ENCODE measurements at regions of chr15 and their contacts with region 1.

Region 1: DNA sequence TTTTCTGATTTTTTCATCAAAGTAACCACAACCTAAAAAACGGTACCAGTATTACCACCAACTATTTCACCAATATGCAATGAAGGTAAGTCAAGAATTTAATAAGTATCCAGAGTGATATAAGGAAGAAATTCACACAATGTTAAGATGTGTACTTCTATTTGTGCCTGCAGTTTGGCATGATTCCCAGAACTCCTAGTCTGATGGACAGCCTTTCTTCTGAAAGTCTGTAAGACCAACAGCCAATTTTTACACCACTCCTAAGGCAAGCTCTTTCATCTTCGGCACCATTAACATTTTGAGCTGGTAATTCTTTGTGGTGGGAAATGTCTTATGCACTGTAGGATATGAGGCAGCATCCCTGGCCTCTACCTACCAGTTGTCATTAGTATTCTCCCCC is 108.3 kb downstream of the VPS13C start:
- DNase-seq: no peak
- ATAC-seq: no peak
- H3K4me3 ChIP-seq: no peak overlapping the region
- H3K4me3 Mint-ChIP-seq: no peak overlapping the region
- H3K27ac ChIP-seq: no peak overlapping the region
- H3K27ac Mint-ChIP-seq: no peak overlapping the region
- H3K4me1 ChIP-seq: no peaks in the 10 kb centered on the region
- H3K4me1 Mint-ChIP-seq: no peaks in the 10 kb centered on the region
- H3K27me3 ChIP-seq: no peaks in the 10 kb centered on the region
- H3K27me3 Mint-ChIP-seq: no peaks in the 10 kb centered on the region
- CTCF ChIP-seq: no peak

Region 2: DNA sequence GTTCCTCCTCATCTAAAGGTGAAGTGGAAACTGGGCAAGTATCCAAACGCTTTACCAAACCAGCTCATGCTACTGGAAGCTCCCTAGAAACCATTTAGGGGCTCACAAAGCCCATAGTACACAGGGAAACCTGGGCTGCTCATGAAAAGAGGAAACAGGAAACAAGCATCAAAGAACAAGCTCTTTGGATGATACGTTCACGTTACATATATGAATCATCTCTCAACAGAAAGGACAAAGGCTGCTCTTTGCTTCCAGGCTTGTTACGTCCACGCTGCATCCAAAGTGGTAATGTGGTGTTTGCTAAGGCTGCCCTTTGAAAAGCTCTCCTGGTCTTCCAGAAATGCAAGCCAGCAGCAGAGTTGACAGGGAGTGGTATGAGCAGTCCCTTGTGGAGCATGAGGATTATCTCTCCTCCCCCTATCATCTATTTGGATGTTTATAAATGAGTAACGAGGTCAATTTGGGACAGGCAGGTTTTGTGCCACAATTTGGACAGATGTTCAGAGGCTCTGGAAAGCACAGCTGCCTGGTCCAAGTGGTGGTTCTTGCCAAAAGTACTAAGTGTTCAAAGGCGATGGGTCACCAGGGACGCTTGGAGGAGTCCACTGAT is 624.8 kb before region 1 on chr15:
- CTCF ChIA-PET with region 1: no interaction called
- POLR2A ChIA-PET with region 1: no interaction called
- intact Hi-C with region 1: no loop called
- DNase-seq: no peak
- ATAC-seq: no peak
- H3K4me3 ChIP-seq: no peak overlapping the region
- H3K4me3 Mint-ChIP-seq: no peak overlapping the region
- H3K27ac ChIP-seq: no peak overlapping the region
- H3K27ac Mint-ChIP-seq: no peak overlapping the region
- H3K4me1 ChIP-seq: no peaks in the 10 kb centered on the region
- H3K4me1 Mint-ChIP-seq: no peaks in the 10 kb centered on the region
- H3K27me3 ChIP-seq: no peaks in the 10 kb centered on the region
- H3K27me3 Mint-ChIP-seq: peaks cover 26% of the 10 kb centered on the region
- CTCF ChIP-seq: no peak

Region 3: GRCh38 chr15:61916104-61916503 is 35.8 kb before region 1 on chr15:
- CTCF ChIA-PET with region 1: no interaction called
- POLR2A ChIA-PET with region 1: no interaction called
- intact Hi-C with region 1: loop called in 1 of 2 experiments (anchors 5 kb)
- DNase-seq: no peak
- ATAC-seq: no peak
- H3K4me3 ChIP-seq: no peak overlapping the region
- H3K4me3 Mint-ChIP-seq: no peak overlapping the region
- H3K27ac ChIP-seq: no peak overlapping the region
- H3K27ac Mint-ChIP-seq: no peak overlapping the region
- H3K4me1 ChIP-seq: no peaks in the 10 kb centered on the region
- H3K4me1 Mint-ChIP-seq: no peaks in the 10 kb centered on the region
- H3K27me3 ChIP-seq: no peaks in the 10 kb centered on the region
- H3K27me3 Mint-ChIP-seq: no peaks in the 10 kb centered on the region
- CTCF ChIP-seq: no peak

Region 4: GRCh38 chr15:61938249-61938648 is 13.7 kb before region 1 on chr15:
- CTCF ChIA-PET with region 1: no interaction called
- POLR2A ChIA-PET with region 1: no interaction called
- intact Hi-C with region 1: no loop called
- DNase-seq: no peak
- ATAC-seq: no peak
- H3K4me3 ChIP-seq: no peak overlapping the region
- H3K4me3 Mint-ChIP-seq: no peak overlapping the region
- H3K27ac ChIP-seq: no peak overlapping the region
- H3K27ac Mint-ChIP-seq: peak overlapping the region; percentile 4
- H3K4me1 ChIP-seq: no peaks in the 10 kb centered on the region
- H3K4me1 Mint-ChIP-seq: no peaks in the 10 kb centered on the region
- H3K27me3 ChIP-seq: no peaks in the 10 kb centered on the region
- H3K27me3 Mint-ChIP-seq: no peaks in the 10 kb centered on the region
- CTCF ChIP-seq: no peak

Measured in CD4-positive, alpha-beta T cell (primary cell).